ENCODE measurements at regions of chr1 and their contacts with region 1.

Region 1: GRCh38 chr1:201559679-201560162 is 20.8 kb downstream of the NAV1 start:
- DNase-seq: peak; percentile 64 to 82
- H3K4me3 ChIP-seq: no peak overlapping the region
- H3K27ac ChIP-seq: no peak overlapping the region
- H3K4me1 ChIP-seq: peaks cover 0 to 8% of the 10 kb centered on the region in 2 donors
- H3K27me3 ChIP-seq: no peaks in the 10 kb centered on the region
- CTCF ChIP-seq: peak; percentile 94 to 97 (median 97)
- POLR2A ChIP-seq: no peak

Region 2: DNA sequence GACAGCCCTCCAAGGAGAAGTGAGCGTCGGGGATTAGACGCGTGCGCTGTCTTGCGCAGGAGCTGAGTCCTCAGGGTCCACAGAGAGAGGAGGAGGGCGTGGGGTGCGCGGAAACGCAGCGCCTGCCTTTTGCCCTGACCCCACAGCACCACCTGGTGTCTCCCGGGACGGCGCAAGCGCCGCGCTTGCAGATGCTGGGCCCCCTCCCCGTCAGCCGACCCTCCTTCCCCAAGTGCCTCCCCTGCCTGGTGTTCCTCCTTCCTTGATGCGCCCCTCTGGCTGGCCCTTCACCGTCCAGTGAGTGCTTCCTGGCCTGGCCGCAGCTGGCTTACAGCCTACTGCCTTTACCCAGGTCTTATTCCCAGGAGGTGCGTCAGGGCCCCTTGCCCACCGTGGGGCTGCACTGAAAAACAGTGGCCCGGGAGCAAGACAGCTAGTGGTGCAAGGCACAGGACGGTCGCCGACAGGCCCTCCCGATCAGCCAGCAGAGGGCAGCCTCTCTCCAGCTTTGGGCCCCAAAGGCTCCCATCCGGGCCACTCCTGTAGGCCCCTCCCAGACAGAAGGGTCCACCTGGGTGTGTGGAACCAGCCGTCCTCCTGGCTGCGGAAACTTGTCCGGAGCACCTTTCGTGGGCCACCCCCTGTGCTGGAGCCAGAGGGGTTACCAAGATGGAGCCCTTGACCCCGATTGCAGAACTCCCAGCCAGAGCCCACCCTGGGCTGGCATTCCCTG is 77.8 kb before region 1 on chr1:
- intact Hi-C with region 1: no loop called
- DNase-seq: peak; percentile 88 to 90
- H3K4me3 ChIP-seq: peak overlapping the region; percentile 14 to 57 (median 46)
- H3K27ac ChIP-seq: peak overlapping the region; percentile 85 to 91
- H3K4me1 ChIP-seq: peaks cover 0 to 9% of the 10 kb centered on the region in 2 donors
- H3K27me3 ChIP-seq: no peaks in the 10 kb centered on the region
- CTCF ChIP-seq: peak; percentile 67 to 98 (median 97)
- POLR2A ChIP-seq: no peak

Region 3: DNA sequence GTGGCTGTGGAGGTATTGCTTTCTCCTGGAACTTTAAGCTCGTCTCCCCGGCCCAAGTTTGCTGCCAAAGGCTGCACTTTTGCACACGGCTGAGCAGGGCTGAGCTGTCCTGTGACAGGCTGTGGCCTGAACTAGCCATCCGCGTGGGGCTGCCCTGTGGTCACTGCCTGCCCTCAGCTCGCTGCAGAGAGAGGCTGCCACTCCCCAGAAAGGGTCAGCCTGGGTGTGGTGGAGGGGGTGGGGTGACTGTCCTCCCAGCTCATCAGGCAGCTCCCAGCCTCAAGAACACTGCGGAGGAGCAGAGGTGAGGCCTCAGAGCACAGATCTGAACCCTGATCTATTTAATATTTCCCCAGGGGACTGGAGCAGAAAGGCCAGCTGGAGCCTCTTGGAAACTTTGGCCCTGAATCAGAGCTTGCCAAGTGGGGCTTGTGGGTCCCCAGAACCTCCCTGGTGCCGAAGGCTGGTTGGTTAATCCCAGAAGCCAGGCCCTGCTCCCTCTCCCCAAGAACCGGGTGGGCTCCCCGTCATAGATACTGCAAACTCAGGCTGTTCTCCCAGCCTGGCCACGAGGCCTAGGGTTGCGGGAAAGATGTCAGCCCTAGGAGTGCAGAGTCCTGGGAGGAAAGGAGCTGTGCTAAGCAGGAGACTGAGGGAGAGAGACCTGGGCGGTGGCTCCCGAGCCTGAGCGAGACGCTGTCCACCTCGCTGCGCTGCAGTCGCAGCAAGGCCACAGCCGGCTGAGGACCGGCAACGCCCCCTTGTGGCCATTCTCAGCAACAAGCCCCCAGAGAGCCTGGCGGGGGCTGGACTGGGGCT is 144.1 kb after region 1 on chr1:
- intact Hi-C with region 1: loop called (anchors 5 kb)
- DNase-seq: peak; percentile 60 to 84
- H3K4me3 ChIP-seq: no peak overlapping the region
- H3K27ac ChIP-seq: peak overlapping the region in 1 of 2 donors; percentile 86
- H3K4me1 ChIP-seq: no peaks in the 10 kb centered on the region
- H3K27me3 ChIP-seq: no peaks in the 10 kb centered on the region
- CTCF ChIP-seq: peak; percentile 95 to 97 (median 97)
- POLR2A ChIP-seq: no peak

Region 4: DNA sequence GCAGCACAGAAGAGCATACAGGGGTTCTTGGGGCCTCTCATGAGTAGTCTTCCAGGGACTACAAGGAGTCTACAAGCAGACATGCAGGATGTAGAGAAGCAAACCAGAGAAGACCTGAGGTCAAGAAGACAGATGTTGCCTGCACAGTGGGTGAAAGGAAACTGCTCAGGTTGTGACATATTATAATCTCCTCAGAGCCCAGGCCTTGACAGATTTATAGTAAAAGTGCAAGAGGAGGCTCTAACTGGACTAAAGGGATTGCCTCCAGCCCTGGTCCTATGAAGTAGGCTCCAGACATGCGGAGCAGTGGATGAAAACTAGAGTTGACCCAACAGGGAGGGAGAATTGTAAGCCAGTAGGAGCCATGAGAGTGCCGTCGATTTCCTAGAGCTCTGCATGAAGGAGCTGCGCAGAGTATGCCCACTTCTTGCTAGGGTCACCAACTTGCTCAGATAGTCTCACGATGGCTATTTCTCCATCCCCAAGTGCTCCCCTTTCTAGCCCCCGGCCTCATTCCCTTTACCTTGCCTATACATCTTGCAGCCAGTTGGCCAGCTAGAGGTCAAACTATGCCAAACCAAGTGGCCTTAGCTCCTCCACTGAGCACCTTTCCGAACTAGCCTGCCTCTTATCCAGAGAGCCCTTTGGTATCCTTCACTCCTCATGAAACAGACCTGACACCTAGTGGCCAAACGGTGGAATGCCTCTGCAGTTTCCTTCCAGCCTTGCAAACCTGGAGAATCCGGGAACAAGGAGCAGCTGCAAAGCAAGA is 233.0 kb after region 1 on chr1:
- intact Hi-C with region 1: loop called (anchors 5 kb)
- DNase-seq: peak; percentile 76 to 82
- H3K4me3 ChIP-seq: no peak overlapping the region
- H3K27ac ChIP-seq: peak overlapping the region in 1 of 2 donors; percentile 68
- H3K4me1 ChIP-seq: no peaks in the 10 kb centered on the region
- H3K27me3 ChIP-seq: no peaks in the 10 kb centered on the region
- CTCF ChIP-seq: peak; percentile 98 to 99 (median 98)
- POLR2A ChIP-seq: no peak